A673 (cell line): ENCODE measurements at regions of chr14 and their contacts with region 1.

Region 1: DNA sequence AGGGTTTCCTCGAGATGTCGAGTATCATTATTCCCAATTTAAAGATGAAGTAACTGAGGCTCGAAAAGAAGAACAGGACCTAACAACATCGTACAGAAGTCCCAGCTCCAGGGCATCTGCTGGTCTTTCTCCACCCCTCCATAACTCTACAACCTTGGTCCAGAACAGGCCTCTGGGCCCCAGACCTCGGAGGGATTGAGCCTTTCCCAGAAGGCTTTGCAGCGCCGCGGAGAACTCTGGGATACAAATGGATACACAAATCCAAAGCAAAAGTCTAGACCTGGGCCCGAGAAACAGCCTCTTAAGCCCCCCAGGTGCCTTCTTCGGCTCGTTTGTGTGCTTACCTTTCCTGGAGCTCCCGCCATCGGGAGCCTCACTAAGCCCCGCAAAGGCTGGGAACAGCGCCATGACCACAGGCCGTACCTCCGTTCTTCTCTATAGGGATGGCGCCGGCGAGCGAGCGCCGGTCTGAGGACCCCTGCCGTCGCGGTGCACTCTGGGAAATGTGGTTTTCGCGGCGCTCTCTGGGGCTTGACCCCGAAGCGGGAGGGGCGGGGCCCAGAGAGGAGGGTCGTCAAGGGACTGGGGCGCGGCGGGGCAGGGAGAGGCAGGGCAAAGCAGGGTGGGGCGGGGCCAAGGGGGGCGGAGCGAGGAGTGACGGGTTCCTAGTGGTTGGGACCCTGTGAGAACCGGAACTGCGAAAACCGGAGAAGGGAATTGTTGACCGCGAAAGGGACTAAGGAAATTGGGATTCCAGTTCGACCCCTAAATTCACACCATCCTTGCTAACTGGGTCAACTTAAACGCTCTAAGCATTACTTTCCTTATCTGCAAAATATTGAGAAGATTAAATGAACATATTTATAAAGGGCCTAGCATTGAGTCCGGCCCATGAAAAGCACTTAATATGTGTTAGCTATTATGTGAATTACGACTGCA is at the start of gene NRDE2:
- DNase-seq: peak; percentile 98
- H3K4me3 ChIP-seq: peak within 1 kb of the TSS; percentile 53
- H3K27ac ChIP-seq: peak within 1 kb of the TSS; percentile 71
- H3K4me1 ChIP-seq: no peaks in the 10 kb centered on the region
- H3K27me3 ChIP-seq: peaks cover 4% of the 10 kb centered on the region
- CTCF ChIP-seq: no peak
- total RNA-seq, gene NRDE2: 19.7 and 21.1 TPM in 2 replicates

Region 2: DNA sequence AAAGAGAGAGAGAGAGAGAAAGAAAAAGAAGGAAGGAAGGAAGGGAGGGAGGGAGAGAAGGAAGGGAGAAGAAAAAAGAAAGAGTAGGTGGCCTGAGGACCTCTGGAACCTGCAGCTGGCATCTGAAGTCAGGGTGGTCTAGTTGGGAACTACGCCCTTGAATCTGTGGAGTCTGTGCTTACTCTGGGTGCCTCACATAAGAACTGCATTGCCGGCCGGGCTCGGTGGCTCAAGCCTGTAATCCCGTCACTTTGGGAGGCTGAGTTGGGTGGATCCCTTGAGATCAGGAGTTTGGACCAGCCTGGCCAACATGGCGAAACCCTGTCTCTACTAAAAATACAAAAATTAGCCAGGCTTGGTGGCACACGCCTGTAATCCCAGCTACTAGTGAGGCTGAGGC is 10.0 kb after region 1 on chr14:
- CTCF ChIA-PET with region 1: no interaction called
- POLR2A ChIA-PET with region 1: interaction called, 28 read pairs
- intact Hi-C with region 1: no loop called
- DNase-seq: no peak
- H3K4me3 ChIP-seq: no peak overlapping the region
- H3K27ac ChIP-seq: no peak overlapping the region
- H3K4me1 ChIP-seq: no peaks in the 10 kb centered on the region
- H3K27me3 ChIP-seq: peaks cover 16% of the 10 kb centered on the region
- CTCF ChIP-seq: no peak

Region 3: DNA sequence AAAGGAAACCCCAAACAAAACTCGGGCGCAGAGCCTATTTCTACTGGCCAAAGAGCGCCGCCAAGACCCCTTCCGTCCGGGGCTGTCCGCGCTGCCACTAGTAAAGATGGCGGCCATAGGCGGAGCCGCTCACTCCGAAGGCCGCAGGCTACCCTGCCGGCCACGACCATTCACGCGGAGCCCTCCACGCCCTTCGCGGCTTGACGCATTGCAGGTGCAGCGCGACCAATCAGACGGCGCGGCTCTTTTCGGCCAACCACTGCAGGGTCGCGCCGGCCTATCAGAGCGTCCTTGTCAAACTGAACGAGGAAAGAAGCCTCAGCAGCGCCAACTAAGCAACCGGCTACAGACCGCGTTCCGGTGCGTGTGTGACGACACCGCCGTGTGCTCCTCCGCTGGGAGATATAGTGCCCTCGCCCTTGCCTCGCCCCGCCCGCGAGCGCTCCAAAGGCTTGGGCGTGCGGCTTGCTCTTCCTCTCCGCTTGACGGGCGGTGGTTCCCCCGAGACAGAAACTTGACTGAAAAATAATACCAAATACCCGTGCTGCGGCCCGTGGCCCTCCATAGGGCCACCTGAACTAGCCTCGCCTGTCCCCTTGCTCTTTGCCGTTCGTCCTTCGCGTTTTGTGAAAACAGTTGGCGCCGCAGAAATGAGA is 51.4 kb after region 1 on chr14:
- CTCF ChIA-PET with region 1: no interaction called
- POLR2A ChIA-PET with region 1: no interaction called
- intact Hi-C with region 1: loop called (anchors 2 kb)
- DNase-seq: peak; percentile 99
- H3K4me3 ChIP-seq: peak overlapping the region; percentile 60
- H3K27ac ChIP-seq: peak overlapping the region; percentile 98
- H3K4me1 ChIP-seq: peaks cover 21% of the 10 kb centered on the region
- H3K27me3 ChIP-seq: no peaks in the 10 kb centered on the region
- CTCF ChIP-seq: no peak